HepG2 (cell line): ENCODE measurements at regions of chr1 and their contacts with region 1.

Region 1: GRCh38 chr1:151539990-151540981 is at the start of gene TUFT1:
- DNase-seq: peak; percentile 90
- ATAC-seq: peak; percentile 93
- H3K4me3 ChIP-seq: peak within 1 kb of the TSS; percentile 70 to 82 (median 73)
- H3K27ac ChIP-seq: peak within 1 kb of the TSS; percentile 70
- H3K4me1 ChIP-seq: peaks cover 31% of the 10 kb centered on the region
- H3K27me3 ChIP-seq: no peaks in the 10 kb centered on the region; a peak in 1 of 5 replicates
- CTCF ChIP-seq: 0 out of 2 replicates have a peak, but pooled peaks have one; percentile 8
- EP300 ChIP-seq: no peak
- POLR2A ChIP-seq: peak; percentile 98 to 100
- RAD21 ChIP-seq: peak; percentile 47; the same call in 1 of the 2 replicates
- total RNA-seq, gene TUFT1: 7.3 and 7.7 TPM in 2 replicates

Region 2: DNA sequence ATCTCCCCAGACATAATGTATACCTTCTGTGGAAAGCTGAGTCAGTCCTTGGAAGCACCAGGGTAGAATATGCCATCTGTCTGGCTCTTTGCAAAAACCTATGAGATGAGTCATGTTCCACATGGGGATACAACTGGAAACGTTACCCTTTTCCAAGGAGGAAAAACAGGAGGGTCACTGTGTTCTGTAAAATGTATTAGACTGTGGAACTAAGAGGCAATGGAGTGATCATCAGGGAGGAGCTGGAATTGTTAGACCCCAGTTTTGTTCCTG is 301.9 kb before region 1 on chr1:
- CTCF ChIA-PET with region 1: no interaction called
- POLR2A ChIA-PET with region 1: no interaction called
- in situ Hi-C with region 1: no loop called
- intact Hi-C with region 1: no loop called
- DNase-seq: no peak
- ATAC-seq: no peak
- H3K4me3 ChIP-seq: no peak overlapping the region
- H3K27ac ChIP-seq: no peak overlapping the region
- H3K4me1 ChIP-seq: no peaks in the 10 kb centered on the region
- H3K27me3 ChIP-seq: no peaks in the 10 kb centered on the region
- CTCF ChIP-seq: no peak
- EP300 ChIP-seq: no peak
- POLR2A ChIP-seq: no peak
- RAD21 ChIP-seq: no peak

Region 3: GRCh38 chr1:151510957-151511635 is 29.2 kb before region 1 on chr1 and contains the start of gene CGN:
- CTCF ChIA-PET with region 1: no interaction called
- POLR2A ChIA-PET with region 1: interaction called, 13 read pairs
- in situ Hi-C with region 1: no loop called
- intact Hi-C with region 1: no loop called
- DNase-seq: peak; percentile 73
- ATAC-seq: peak; percentile 82
- H3K4me3 ChIP-seq: peak within 1 kb of the TSS; percentile 66 to 80 (median 71)
- H3K27ac ChIP-seq: no peak within 1 kb of the TSS
- H3K4me1 ChIP-seq: peaks cover 66% of the 10 kb centered on the region
- H3K27me3 ChIP-seq: peaks cover 0 to 16% of the 10 kb centered on the region in 2 experiments; a peak in 2 of 5 replicates
- CTCF ChIP-seq: no peak
- EP300 ChIP-seq: no peak
- POLR2A ChIP-seq: no peak
- RAD21 ChIP-seq: no peak
- total RNA-seq, gene CGN: 0.24 and 0.75 TPM in 2 replicates

Region 4: GRCh38 chr1:151520359-151520758 is 19.9 kb before region 1 on chr1:
- CTCF ChIA-PET with region 1: no interaction called
- POLR2A ChIA-PET with region 1: interaction called, 14 read pairs
- in situ Hi-C with region 1: no loop called
- intact Hi-C with region 1: no loop called
- DNase-seq: no peak
- ATAC-seq: peak; percentile 27; the same call in 1 of the 3 replicates
- H3K4me3 ChIP-seq: no peak overlapping the region
- H3K27ac ChIP-seq: no peak overlapping the region
- H3K4me1 ChIP-seq: peaks cover 24% of the 10 kb centered on the region
- H3K27me3 ChIP-seq: no peaks in the 10 kb centered on the region
- CTCF ChIP-seq: peak; percentile 32; the same call in 1 of the 2 replicates
- EP300 ChIP-seq: no peak; a peak in 1 of 4 replicates
- POLR2A ChIP-seq: no peak
- RAD21 ChIP-seq: no peak

Region 5: DNA sequence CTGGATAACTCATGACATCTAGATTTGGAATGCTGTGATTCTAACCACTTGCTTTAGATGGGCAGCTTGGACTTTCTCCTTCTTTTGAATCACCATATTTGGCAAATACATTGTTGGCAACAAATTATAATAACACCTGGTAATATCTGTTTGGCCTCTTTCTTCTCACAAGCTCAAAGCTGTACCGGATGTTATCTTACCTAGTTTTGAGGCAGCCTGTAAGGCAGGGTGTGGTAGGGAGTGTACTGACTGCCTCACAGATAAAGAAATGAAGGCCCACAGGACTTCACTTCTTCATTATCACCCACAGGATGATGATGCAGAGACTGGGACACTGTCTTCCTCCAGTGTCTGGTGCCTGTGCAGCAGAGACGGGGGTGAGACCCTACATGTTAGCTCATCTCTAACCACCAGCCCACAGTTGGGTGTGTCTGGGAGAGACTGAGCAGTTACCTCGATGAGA is 28.4 kb after region 1 on chr1:
- CTCF ChIA-PET with region 1: interaction called, 3 read pairs
- POLR2A ChIA-PET with region 1: interaction called, 28 read pairs
- in situ Hi-C with region 1: no loop called
- intact Hi-C with region 1: no loop called
- DNase-seq: no peak
- ATAC-seq: no peak
- H3K4me3 ChIP-seq: no peak overlapping the region
- H3K27ac ChIP-seq: no peak overlapping the region
- H3K4me1 ChIP-seq: peaks cover 43% of the 10 kb centered on the region
- H3K27me3 ChIP-seq: no peaks in the 10 kb centered on the region
- CTCF ChIP-seq: no peak
- EP300 ChIP-seq: no peak
- POLR2A ChIP-seq: no peak
- RAD21 ChIP-seq: no peak

Region 6: DNA sequence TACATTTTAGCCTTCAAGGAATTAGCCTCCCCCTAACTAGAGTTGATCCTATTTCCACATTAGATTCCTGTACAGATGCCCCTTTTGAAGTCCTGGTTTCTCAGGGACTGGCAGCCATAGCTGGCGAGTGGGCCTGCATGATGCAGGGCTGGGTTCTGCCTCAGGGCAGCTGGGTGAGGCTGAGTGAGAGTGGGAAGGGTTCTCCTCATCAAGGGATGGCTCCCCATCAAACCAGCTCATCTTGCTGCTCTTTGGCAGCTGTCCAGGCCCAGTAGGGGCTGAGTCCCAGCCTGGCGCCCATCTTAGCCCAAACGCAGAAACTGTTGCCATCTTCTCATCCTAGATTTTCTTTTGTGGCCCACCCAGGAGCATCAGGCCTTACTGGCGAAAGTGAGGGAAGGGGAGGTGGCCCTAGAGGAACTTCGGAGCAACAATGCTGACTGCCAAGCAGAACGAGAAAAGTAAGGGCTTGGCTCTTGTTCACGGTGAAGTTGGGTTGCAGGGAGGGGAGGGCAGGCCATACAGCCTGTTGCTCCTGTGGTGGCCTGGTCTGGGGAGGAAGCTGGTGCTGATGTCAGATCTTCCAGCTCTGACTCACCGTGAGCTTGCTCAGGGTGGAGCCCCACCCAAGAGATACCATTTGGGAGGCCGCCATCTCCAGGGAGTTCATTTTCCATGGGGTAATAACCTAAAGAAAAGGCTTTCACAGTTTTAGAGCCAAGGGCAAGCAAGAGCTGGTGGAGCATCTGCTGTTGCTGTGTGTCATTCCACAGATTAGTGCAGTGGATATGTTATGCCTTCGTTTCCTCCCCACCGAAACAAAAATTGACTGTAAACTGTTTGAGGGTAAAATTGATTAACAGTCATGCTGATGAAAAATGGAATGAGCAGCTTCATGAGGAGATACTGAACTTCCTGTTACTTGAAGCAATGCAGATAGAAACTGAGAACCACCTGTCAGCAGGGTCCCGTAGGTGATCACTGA is 34.6 kb after region 1 on chr1:
- CTCF ChIA-PET with region 1: no interaction called
- POLR2A ChIA-PET with region 1: interaction called, 28 read pairs
- in situ Hi-C with region 1: no loop called
- intact Hi-C with region 1: no loop called
- DNase-seq: no peak
- ATAC-seq: no peak
- H3K4me3 ChIP-seq: no peak overlapping the region
- H3K27ac ChIP-seq: no peak overlapping the region
- H3K4me1 ChIP-seq: peaks cover 12% of the 10 kb centered on the region
- H3K27me3 ChIP-seq: no peaks in the 10 kb centered on the region
- CTCF ChIP-seq: no peak
- EP300 ChIP-seq: no peak
- POLR2A ChIP-seq: no peak
- RAD21 ChIP-seq: no peak

Region 7: DNA sequence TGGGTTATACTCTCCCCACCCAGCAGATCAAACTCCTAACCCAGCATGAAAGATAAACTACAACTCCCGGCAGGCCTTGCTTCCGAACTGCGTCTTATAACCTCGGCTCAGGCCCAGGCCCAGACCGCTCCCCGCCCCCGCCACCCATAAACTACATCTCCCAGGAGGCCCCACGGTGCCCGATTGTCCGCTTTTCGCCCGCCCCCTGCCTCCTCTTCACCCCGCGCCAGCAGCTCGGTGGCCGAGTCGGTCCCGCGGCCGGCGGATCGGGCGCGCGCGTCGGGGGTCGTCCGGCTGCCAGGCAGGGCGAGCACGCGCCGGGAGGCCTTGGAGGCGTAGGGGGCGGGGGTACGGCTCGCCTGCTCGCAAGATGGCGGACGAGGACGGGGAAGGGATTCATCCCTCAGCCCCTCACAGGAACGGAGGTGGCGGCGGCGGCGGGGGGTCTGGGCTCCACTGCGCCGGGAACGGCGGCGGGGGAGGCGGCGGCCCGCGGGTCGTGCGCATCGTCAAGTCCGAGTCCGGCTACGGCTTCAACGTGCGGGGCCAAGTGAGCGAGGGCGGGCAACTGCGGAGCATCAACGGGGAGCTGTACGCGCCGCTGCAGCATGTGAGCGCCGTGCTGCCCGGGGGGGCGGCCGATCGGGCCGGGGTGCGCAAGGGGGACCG is 71.7 kb after region 1 on chr1 and contains the start of gene SNX27:
- CTCF ChIA-PET with region 1: no interaction called
- POLR2A ChIA-PET with region 1: interaction called, 16 read pairs
- in situ Hi-C with region 1: no loop called
- intact Hi-C with region 1: no loop called
- DNase-seq: peak; percentile 92
- ATAC-seq: peak; percentile 96
- H3K4me3 ChIP-seq: peak within 1 kb of the TSS; percentile 86 to 99 (median 91)
- H3K27ac ChIP-seq: peak within 1 kb of the TSS; percentile 74
- H3K4me1 ChIP-seq: peaks cover 64% of the 10 kb centered on the region
- H3K27me3 ChIP-seq: no peaks in the 10 kb centered on the region
- CTCF ChIP-seq: 0 out of 2 replicates have a peak, but pooled peaks have one; percentile 2
- EP300 ChIP-seq: no peak
- POLR2A ChIP-seq: peak; percentile 8 to 62; a peak in 2 of 4 replicates
- RAD21 ChIP-seq: 0 out of 2 replicates have a peak, but pooled peaks have one; percentile 31
- total RNA-seq, gene SNX27: 17.8 and 22.8 TPM in 2 replicates

Region 8: GRCh38 chr1:151728151-151729054 is 188.1 kb after region 1 on chr1:
- CTCF ChIA-PET with region 1: no interaction called
- POLR2A ChIA-PET with region 1: no interaction called
- in situ Hi-C with region 1: loop called (anchors 25 kb)
- intact Hi-C with region 1: no loop called
- DNase-seq: no peak
- ATAC-seq: peak; percentile 61
- H3K4me3 ChIP-seq: no peak overlapping the region
- H3K27ac ChIP-seq: no peak overlapping the region
- H3K4me1 ChIP-seq: peaks cover 47% of the 10 kb centered on the region
- H3K27me3 ChIP-seq: peaks cover 0 to 17% of the 10 kb centered on the region in 2 experiments; a peak in 3 of 5 replicates
- CTCF ChIP-seq: no peak
- EP300 ChIP-seq: no peak
- POLR2A ChIP-seq: no peak
- RAD21 ChIP-seq: no peak